CD4-positive, alpha-beta T cell (primary cell): ENCODE measurements at regions of chr13 and their contacts with region 1.

Region 1: DNA sequence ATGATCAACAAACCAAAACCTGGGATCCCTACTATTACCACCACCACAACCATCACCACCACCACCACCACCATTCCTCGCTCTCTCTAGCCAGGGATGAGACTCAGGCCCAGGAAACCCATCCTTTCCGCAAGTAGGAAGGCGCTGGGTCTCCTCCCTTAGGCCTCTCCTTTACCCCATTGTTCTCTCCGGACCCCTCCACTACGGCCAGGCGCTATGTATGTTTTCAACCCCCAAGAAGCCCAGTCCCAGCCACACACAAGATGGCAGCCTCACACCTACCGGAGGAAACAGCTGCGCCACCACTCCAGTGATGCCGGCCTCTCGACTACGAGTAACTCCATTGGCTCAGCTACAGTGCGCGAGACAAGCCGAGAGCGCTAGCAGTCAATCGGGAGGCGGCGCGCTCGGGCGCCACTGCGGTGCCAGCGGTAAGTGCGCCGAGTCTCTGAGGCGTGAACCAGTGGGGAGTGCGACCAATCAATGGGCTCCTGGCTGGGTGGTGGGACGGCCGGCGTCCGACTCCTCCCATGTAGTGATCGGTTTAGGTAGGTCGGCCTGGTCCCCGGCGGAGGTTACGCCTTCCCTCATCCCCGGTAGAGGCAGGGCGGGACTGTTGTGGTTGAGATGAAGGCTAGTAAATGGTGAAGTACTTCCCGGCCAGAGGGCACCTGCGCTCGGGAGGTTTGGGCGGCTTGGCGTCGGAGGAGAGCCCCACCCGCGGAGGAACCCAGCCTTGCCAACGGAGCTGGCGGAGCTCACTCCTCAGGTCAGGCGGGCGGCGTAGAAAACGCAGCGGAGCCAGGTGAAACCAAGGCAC is at the starts of genes CAB39L and SETDB2:
- DNase-seq: peak; percentile 97 to 100 (median 98)
- ATAC-seq: peak; percentile 88
- H3K4me3 ChIP-seq: peak within 1 kb of the TSS; percentile 76
- H3K4me3 Mint-ChIP-seq: peak within 1 kb of the TSS; percentile 97
- H3K27ac ChIP-seq: peak within 1 kb of the TSS; percentile 85
- H3K27ac Mint-ChIP-seq: peak within 1 kb of the TSS; percentile 96
- H3K4me1 ChIP-seq: peaks cover 18% of the 10 kb centered on the region
- H3K4me1 Mint-ChIP-seq: peaks cover 48% of the 10 kb centered on the region
- H3K27me3 ChIP-seq: no peaks in the 10 kb centered on the region
- H3K27me3 Mint-ChIP-seq: no peaks in the 10 kb centered on the region
- CTCF ChIP-seq: peak; percentile 41
- total RNA-seq, gene CAB39L: 1.9 to 2.5 TPM
- total RNA-seq, gene SETDB2: 10.8 to 11.5 TPM

Region 2: DNA sequence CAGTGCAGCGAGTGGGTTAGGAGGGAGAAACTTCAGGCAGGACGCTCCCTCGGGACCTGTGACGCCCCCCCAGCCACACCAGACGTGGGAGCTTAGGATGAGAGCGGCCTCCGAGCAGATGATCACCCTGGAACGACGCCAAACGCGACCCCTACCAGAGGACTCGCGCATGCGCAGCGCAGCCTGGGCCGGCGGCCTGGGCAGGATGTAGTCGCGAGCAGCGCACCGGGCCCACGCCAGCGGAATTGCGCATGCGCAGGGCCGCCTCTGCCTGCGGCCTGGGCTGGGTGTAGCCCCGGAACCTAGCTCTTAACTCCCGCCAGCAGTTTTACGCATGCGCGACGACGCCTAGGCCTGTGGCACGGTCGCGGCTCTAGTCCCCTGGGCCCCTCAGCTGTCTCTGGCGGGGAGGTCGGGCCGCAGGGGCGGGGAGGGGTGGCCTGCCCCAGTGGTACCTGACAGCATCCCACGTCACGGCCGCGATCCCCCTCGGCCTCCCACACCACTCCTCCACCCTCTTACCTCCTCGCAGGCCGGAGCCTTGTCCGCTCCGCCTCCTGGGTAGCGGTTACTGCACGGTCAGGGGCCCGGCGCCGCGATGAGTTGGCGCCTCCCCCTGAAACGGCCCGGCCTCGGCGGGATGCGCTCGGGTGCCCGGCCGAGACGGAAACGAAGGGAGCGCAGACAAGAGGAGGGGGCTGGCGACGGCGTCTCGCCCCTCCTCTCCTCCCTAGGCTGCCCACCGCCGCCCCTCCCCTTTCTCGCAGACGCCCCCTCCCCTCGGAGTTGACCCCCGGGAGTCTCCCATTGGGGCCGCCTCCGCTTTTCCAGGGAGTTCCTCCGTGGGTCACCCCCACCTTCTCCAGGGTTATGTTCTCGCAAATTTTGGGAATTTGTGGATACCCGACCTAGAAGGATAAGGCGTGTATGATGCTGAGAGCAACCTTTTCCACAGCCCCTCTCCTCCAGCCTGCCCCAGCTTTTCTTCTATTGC is 911.1 kb before region 1 on chr13 and contains the start of gene RCBTB2:
- CTCF ChIA-PET with region 1: no interaction called
- POLR2A ChIA-PET with region 1: interaction called, 10 read pairs
- intact Hi-C with region 1: no loop called
- DNase-seq: peak; percentile 95 to 100 (median 99)
- ATAC-seq: peak; percentile 88
- H3K4me3 ChIP-seq: peak within 1 kb of the TSS; percentile 94
- H3K4me3 Mint-ChIP-seq: peak within 1 kb of the TSS; percentile 97
- H3K27ac ChIP-seq: peak within 1 kb of the TSS; percentile 93 to 96
- H3K27ac Mint-ChIP-seq: peak within 1 kb of the TSS; percentile 90
- H3K4me1 ChIP-seq: peaks cover 31% of the 10 kb centered on the region
- H3K4me1 Mint-ChIP-seq: peaks cover 30% of the 10 kb centered on the region
- H3K27me3 ChIP-seq: no peaks in the 10 kb centered on the region
- H3K27me3 Mint-ChIP-seq: no peaks in the 10 kb centered on the region
- CTCF ChIP-seq: no peak
- total RNA-seq, gene RCBTB2: 6.1 to 6.5 TPM

Region 3: GRCh38 chr13:48600374-48601364 is 843.2 kb before region 1 on chr13:
- CTCF ChIA-PET with region 1: no interaction called
- POLR2A ChIA-PET with region 1: no interaction called
- intact Hi-C with region 1: no loop called
- DNase-seq: no peak
- ATAC-seq: no peak
- H3K4me3 ChIP-seq: no peak overlapping the region
- H3K4me3 Mint-ChIP-seq: no peak overlapping the region
- H3K27ac ChIP-seq: no peak overlapping the region
- H3K27ac Mint-ChIP-seq: no peak overlapping the region
- H3K4me1 ChIP-seq: no peaks in the 10 kb centered on the region
- H3K4me1 Mint-ChIP-seq: peaks cover 5% of the 10 kb centered on the region
- H3K27me3 ChIP-seq: no peaks in the 10 kb centered on the region
- H3K27me3 Mint-ChIP-seq: no peaks in the 10 kb centered on the region
- CTCF ChIP-seq: no peak

Region 4: GRCh38 chr13:48727241-48728011 is 716.5 kb before region 1 on chr13:
- CTCF ChIA-PET with region 1: no interaction called
- POLR2A ChIA-PET with region 1: no interaction called
- intact Hi-C with region 1: no loop called
- DNase-seq: no peak
- ATAC-seq: no peak
- H3K4me3 ChIP-seq: no peak overlapping the region
- H3K4me3 Mint-ChIP-seq: no peak overlapping the region
- H3K27ac ChIP-seq: no peak overlapping the region
- H3K27ac Mint-ChIP-seq: no peak overlapping the region
- H3K4me1 ChIP-seq: peaks cover 5% of the 10 kb centered on the region
- H3K4me1 Mint-ChIP-seq: peaks cover 14% of the 10 kb centered on the region
- H3K27me3 ChIP-seq: no peaks in the 10 kb centered on the region
- H3K27me3 Mint-ChIP-seq: no peaks in the 10 kb centered on the region
- CTCF ChIP-seq: no peak

Region 5: GRCh38 chr13:49374585-49375290 is 69.2 kb before region 1 on chr13:
- CTCF ChIA-PET with region 1: no interaction called
- POLR2A ChIA-PET with region 1: interaction called, 21 read pairs
- intact Hi-C with region 1: loop called in 1 of 2 experiments (anchors 5 kb)
- DNase-seq: no peak
- ATAC-seq: no peak
- H3K4me3 ChIP-seq: no peak overlapping the region
- H3K4me3 Mint-ChIP-seq: no peak overlapping the region
- H3K27ac ChIP-seq: no peak overlapping the region
- H3K27ac Mint-ChIP-seq: no peak overlapping the region
- H3K4me1 ChIP-seq: peaks cover 19% of the 10 kb centered on the region
- H3K4me1 Mint-ChIP-seq: peaks cover 35% of the 10 kb centered on the region
- H3K27me3 ChIP-seq: no peaks in the 10 kb centered on the region
- H3K27me3 Mint-ChIP-seq: no peaks in the 10 kb centered on the region
- CTCF ChIP-seq: no peak

Region 6: DNA sequence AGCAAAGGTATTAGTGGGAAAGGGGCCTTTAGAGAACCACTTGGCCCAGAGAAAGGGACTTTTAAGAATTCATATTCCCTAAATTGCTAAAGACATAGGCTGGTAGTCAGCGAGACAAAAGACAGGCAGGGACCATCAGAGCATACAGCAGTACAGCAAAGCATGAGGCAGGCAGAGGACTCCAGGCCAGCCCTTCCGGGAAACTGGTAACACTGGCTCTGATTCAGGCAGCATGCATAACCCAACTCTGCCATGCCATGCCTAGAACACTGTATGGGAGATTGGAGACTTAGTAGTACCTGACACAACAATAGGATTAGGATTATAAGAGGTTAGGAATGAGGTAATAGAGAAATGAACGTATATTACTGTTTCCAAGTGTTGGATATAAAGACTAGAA is 34.9 kb before region 1 on chr13:
- CTCF ChIA-PET with region 1: no interaction called
- POLR2A ChIA-PET with region 1: no interaction called
- intact Hi-C with region 1: no loop called
- DNase-seq: no peak
- ATAC-seq: no peak
- H3K4me3 ChIP-seq: no peak overlapping the region
- H3K4me3 Mint-ChIP-seq: no peak overlapping the region
- H3K27ac ChIP-seq: no peak overlapping the region
- H3K27ac Mint-ChIP-seq: no peak overlapping the region
- H3K4me1 ChIP-seq: no peaks in the 10 kb centered on the region
- H3K4me1 Mint-ChIP-seq: no peaks in the 10 kb centered on the region
- H3K27me3 ChIP-seq: no peaks in the 10 kb centered on the region
- H3K27me3 Mint-ChIP-seq: no peaks in the 10 kb centered on the region
- CTCF ChIP-seq: no peak

Region 7: GRCh38 chr13:49495783-49496762 is 52.2 kb after region 1 on chr13 and contains the start of gene PHF11:
- CTCF ChIA-PET with region 1: interaction called, 5 read pairs
- POLR2A ChIA-PET with region 1: interaction called, 169 read pairs
- intact Hi-C with region 1: loop called (anchors 1 to 2 kb)
- DNase-seq: peak; percentile 76 to 95 (median 84)
- ATAC-seq: peak; percentile 77
- H3K4me3 ChIP-seq: peak within 1 kb of the TSS; percentile 82
- H3K4me3 Mint-ChIP-seq: peak within 1 kb of the TSS; percentile 99
- H3K27ac ChIP-seq: peak within 1 kb of the TSS; percentile 88 to 94
- H3K27ac Mint-ChIP-seq: peak within 1 kb of the TSS; percentile 95
- H3K4me1 ChIP-seq: peaks cover 49% of the 10 kb centered on the region
- H3K4me1 Mint-ChIP-seq: peaks cover 63% of the 10 kb centered on the region
- H3K27me3 ChIP-seq: no peaks in the 10 kb centered on the region
- H3K27me3 Mint-ChIP-seq: no peaks in the 10 kb centered on the region
- CTCF ChIP-seq: no peak
- total RNA-seq, gene PHF11: 105 TPM

Region 8: GRCh38 chr13:49606747-49607648 is 163.1 kb after region 1 on chr13:
- CTCF ChIA-PET with region 1: interaction called, 5 read pairs
- POLR2A ChIA-PET with region 1: interaction called, 7 read pairs
- intact Hi-C with region 1: loop called in 1 of 2 experiments (anchors 1 kb)
- DNase-seq: peak; percentile 66 to 88 (median 76)
- ATAC-seq: peak; percentile 99
- H3K4me3 ChIP-seq: peak overlapping the region; percentile 24
- H3K4me3 Mint-ChIP-seq: peak overlapping the region; percentile 86
- H3K27ac ChIP-seq: no peak overlapping the region
- H3K27ac Mint-ChIP-seq: no peak overlapping the region
- H3K4me1 ChIP-seq: peaks cover 9% of the 10 kb centered on the region
- H3K4me1 Mint-ChIP-seq: peaks cover 5% of the 10 kb centered on the region
- H3K27me3 ChIP-seq: no peaks in the 10 kb centered on the region
- H3K27me3 Mint-ChIP-seq: no peaks in the 10 kb centered on the region
- CTCF ChIP-seq: peak; percentile 82

Region 9: DNA sequence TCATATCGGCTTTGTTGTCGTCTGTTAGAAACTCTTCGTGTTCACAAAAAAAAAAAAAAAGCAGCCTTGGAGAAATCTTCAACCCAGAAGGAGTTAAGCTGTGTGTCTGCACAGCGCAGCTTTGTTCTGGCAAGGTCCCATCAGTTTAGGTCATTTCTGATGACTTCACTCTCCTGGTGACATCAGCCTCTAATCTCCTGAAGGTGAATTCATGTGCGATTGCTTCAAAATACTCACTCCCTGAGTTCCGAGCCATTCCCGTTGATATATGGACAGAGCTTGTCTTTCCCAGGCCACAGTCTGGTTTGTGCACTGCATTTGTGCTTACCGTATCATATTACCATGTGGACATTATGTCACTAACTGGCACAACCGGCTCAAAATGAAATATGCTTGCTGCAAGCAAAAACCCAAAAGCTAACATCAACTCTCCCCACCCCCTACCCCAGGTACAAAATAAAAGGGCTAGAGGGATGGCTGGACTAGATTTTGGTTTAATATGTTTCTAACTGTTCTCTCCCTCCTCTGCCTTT is 913.7 kb after region 1 on chr13:
- CTCF ChIA-PET with region 1: no interaction called
- POLR2A ChIA-PET with region 1: no interaction called
- intact Hi-C with region 1: no loop called
- DNase-seq: no peak
- ATAC-seq: no peak
- H3K4me3 ChIP-seq: no peak overlapping the region
- H3K4me3 Mint-ChIP-seq: no peak overlapping the region
- H3K27ac ChIP-seq: no peak overlapping the region
- H3K27ac Mint-ChIP-seq: no peak overlapping the region
- H3K4me1 ChIP-seq: peaks cover 35% of the 10 kb centered on the region
- H3K4me1 Mint-ChIP-seq: peaks cover 46% of the 10 kb centered on the region
- H3K27me3 ChIP-seq: no peaks in the 10 kb centered on the region
- H3K27me3 Mint-ChIP-seq: no peaks in the 10 kb centered on the region
- CTCF ChIP-seq: no peak